ENCODE measurements at regions of chr16 and their contacts with region 1.

Region 1: GRCh38 chr16:87540945-87541877 is 48.4 kb upstream of the ZCCHC14 start:
- DNase-seq: peak; percentile 86 to 91
- ATAC-seq: peak; percentile 80
- H3K4me3 ChIP-seq: peak overlapping the region in 1 of 2 donors; percentile 2
- H3K27ac ChIP-seq: peak overlapping the region; percentile 18 to 97
- H3K4me1 ChIP-seq: no peaks in the 10 kb centered on the region
- H3K27me3 ChIP-seq: no peaks in the 10 kb centered on the region

Region 2: DNA sequence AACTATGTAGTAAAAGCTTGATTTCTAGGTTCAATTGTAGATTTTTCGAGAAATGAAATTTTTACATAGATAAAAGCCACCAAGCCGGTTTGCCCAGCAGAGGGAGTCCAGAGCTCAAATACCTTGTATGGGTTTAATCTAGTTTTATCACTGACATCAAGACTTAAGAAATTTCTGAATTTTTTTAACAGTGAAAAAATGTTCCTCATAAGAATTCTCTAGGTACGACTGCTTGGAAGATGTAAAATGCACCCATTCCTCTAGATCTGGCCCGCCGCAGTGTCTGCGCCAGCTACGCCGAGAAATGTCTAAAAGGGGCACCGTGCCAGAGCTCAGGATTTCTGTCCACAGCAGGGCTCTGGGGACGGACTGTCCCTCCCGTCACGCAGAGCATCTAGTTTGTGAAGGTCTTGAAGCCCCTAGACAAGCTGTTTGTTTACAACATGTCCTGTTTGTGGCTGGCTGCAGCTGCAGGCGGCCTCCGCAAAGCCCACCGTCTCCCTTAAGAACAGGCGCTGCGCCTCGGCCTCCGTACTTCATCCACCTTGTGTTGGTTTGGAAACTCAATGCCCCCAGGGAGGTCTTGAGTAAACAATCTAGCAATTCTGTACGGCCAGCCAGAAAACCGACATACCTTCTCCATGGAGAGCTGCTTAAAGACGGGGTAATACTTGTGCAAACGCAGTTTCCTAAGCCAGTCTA is 124.2 kb before region 1 on chr16:
- intact Hi-C with region 1: loop called in 1 of 2 experiments (anchors 2 kb)
- DNase-seq: peak in 1 of 2 donors; percentile 58
- ATAC-seq: no peak
- H3K4me3 ChIP-seq: no peak overlapping the region
- H3K27ac ChIP-seq: no peak overlapping the region
- H3K4me1 ChIP-seq: no peaks in the 10 kb centered on the region
- H3K27me3 ChIP-seq: no peaks in the 10 kb centered on the region

Region 3: DNA sequence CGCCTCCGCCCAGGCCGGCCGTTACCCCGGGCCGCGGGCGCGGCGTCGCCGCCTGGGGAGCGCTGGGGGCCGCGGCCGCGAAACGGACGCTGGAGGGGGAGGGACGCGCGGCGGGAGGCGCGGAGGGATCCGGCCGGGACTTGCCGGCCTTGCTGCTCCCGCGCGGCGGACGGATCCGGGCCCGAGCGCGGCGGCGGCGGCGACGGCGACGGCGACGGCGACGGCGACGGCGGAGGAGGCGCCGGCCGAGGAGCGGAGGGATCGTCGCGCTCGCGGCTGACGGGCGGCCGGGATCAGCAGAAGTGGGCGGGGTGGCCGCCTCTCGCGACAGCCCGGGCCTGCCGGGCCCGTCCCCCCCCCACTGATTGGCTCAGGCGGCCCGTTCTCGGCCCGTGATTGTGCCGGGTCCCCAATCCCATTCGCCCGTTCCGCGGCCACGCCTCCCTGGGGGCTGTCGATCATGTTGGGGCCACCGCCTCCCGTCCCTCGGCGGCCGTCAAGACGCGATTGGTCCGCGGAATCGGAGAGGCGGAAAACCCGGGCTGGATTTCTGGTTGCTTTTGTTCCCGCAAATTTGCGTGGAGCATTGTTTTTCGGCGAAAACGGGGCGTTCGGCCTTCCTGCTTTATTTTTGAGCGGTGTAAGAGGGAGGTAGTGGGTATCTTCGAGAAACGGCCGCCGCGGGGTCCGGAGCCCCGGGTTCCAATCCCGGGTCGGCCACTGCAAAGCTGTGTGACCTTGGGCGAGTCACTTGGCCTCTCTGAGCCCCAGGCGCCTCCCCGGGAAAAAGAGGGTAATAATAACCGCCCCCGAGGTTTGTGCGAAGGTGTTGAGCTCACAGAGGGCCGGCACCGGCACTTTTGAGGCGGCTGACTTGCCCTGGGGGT is 48.2 kb before region 1 on chr16 and contains the start of gene ZCCHC14:
- intact Hi-C with region 1: loop called (anchors 2 to 5 kb)
- DNase-seq: peak; percentile 100
- ATAC-seq: peak; percentile 99
- H3K4me3 ChIP-seq: peak within 1 kb of the TSS; percentile 38 to 85
- H3K27ac ChIP-seq: peak within 1 kb of the TSS; percentile 26 to 94
- H3K4me1 ChIP-seq: no peaks in the 10 kb centered on the region
- H3K27me3 ChIP-seq: no peaks in the 10 kb centered on the region
- total RNA-seq, gene ZCCHC14: 32.5 to 42.5 TPM

Region 4: GRCh38 chr16:87515475-87516330 is 25.5 kb before region 1 on chr16:
- intact Hi-C with region 1: loop called in 1 of 2 experiments (anchors 2 kb)
- DNase-seq: no peak
- ATAC-seq: no peak
- H3K4me3 ChIP-seq: no peak overlapping the region
- H3K27ac ChIP-seq: peak overlapping the region in 1 of 2 donors; percentile 12
- H3K4me1 ChIP-seq: no peaks in the 10 kb centered on the region
- H3K27me3 ChIP-seq: no peaks in the 10 kb centered on the region

Region 5: GRCh38 chr16:87571136-87571867 is 30.1 kb after region 1 on chr16:
- intact Hi-C with region 1: loop called in 1 of 2 experiments (anchors 1 kb)
- DNase-seq: peak; percentile 80 to 85
- ATAC-seq: peak; percentile 85
- H3K4me3 ChIP-seq: no peak overlapping the region
- H3K27ac ChIP-seq: peak overlapping the region; percentile 16 to 86
- H3K4me1 ChIP-seq: no peaks in the 10 kb centered on the region
- H3K27me3 ChIP-seq: no peaks in the 10 kb centered on the region

Region 6: DNA sequence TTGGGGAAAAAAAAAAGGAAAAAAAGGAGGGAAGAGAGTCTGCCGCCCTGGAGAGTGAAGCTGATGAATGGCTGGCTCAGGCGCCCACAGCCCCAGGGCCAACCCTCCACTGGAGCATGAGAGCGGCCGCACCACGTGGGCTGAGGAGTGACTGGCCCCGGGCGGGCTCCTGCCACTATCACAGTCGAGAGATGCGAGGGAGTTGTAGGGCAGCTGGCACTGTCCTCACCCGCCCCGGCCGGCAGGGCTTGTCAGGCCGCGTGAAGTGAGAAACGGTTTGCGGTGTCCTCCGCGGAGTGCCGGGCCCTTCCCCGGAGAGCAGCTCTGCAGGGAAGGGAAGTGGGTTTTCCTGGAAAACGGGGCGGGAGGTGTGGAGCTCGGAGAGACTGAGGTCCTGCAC is 107.0 kb after region 1 on chr16:
- intact Hi-C with region 1: no loop called
- DNase-seq: no peak
- ATAC-seq: no peak
- H3K4me3 ChIP-seq: no peak overlapping the region
- H3K27ac ChIP-seq: no peak overlapping the region
- H3K4me1 ChIP-seq: no peaks in the 10 kb centered on the region
- H3K27me3 ChIP-seq: no peaks in the 10 kb centered on the region

Measured in aorta (tissue), 5 donors.